Astrocyte of the cerebellum (primary cell): ENCODE measurements at regions of chr16 and their contacts with region 1.

Region 1: GRCh38 chr16:27740496-27741197 is 190.7 kb downstream of the KATNIP start:
- DNase-seq: no peak
- H3K4me3 ChIP-seq: no peak overlapping the region
- CTCF ChIP-seq: no peak

Region 2: GRCh38 chr16:26583803-26584202 is 1156.8 kb before region 1 on chr16:
- in situ Hi-C with region 1: no loop called
- DNase-seq: no peak
- H3K4me3 ChIP-seq: no peak overlapping the region
- CTCF ChIP-seq: no peak

Region 3: GRCh38 chr16:27706866-27707685 is 33.6 kb before region 1 on chr16:
- in situ Hi-C with region 1: loop called (anchors 5 kb)
- DNase-seq: no peak
- H3K4me3 ChIP-seq: no peak overlapping the region
- CTCF ChIP-seq: no peak